ENCODE measurements at regions of chr10 and their contacts with region 1.

Region 1: GRCh38 chr10:110918643-110919363 is at the start of gene BBIP1:
- DNase-seq: no peak
- ATAC-seq: peak; percentile 91
- H3K4me3 Mint-ChIP-seq: peak within 1 kb of the TSS; percentile 82
- H3K27ac Mint-ChIP-seq: peak within 1 kb of the TSS; percentile 99
- H3K4me1 Mint-ChIP-seq: peaks cover 39% of the 10 kb centered on the region
- H3K27me3 Mint-ChIP-seq: no peaks in the 10 kb centered on the region
- total RNA-seq, gene BBIP1: 23.1 to 24.8 TPM

Region 2: DNA sequence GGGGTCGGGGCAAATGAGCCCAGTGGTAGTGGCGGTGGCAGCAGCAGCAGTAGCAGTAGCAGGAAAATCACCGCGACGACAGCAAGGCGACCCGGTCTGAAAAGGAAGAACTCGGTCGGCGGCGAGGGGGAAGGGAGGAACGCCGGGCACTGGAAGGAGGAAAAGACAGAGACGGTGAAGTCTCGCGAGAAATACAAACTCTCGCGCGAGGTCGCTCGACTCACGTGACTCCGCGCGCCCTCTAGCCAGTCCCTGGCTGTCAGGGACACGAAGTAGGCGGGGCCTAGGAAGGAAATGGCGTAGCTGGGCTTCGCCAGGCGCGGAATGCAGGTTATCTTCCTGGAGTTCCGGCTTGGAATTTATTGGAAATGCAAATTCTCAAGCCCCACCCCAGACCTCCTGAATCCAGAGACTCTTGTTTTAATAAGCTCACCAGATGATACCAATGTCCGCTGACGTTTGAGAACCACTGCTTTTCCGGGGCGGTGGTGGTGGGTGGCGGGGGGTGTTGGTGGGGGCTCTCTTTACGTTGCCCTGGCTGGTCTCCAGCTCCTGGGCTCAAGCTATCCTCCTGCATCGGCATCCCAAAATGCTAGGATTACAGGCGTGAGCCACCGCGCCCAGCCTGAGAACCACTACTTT is 613.9 kb before region 1 on chr10 and contains the start of gene SMNDC1:
- CTCF ChIA-PET with region 1: no interaction called
- DNase-seq: peak; percentile 98
- ATAC-seq: peak; percentile 92
- H3K4me3 Mint-ChIP-seq: peak within 1 kb of the TSS; percentile 97
- H3K27ac Mint-ChIP-seq: peak within 1 kb of the TSS; percentile 98
- H3K4me1 Mint-ChIP-seq: peaks cover 63% of the 10 kb centered on the region
- H3K27me3 Mint-ChIP-seq: no peaks in the 10 kb centered on the region
- total RNA-seq, gene SMNDC1: 40.9 to 43.5 TPM

Region 3: GRCh38 chr10:110901954-110902819 is 16.6 kb before region 1 on chr10:
- CTCF ChIA-PET with region 1: interaction called, 15 read pairs
- DNase-seq: no peak
- ATAC-seq: peak; percentile 45
- H3K4me3 Mint-ChIP-seq: no peak overlapping the region
- H3K27ac Mint-ChIP-seq: no peak overlapping the region
- H3K4me1 Mint-ChIP-seq: peaks cover 26% of the 10 kb centered on the region
- H3K27me3 Mint-ChIP-seq: no peaks in the 10 kb centered on the region

Measured in activated CD8-positive, alpha-beta memory T cell treated with anti-CD3 and anti-CD28 coated beads, Interleukin-2, amount 10 ng/mL, durations not matched to agents 7 days and 5 days (primary cell).